Activated CD4-positive, alpha-beta T cell treated with anti-CD3 and anti-CD28 coated beads, Interleukin-2, amount 10 ng/mL, durations not matched to agents 7 days and 5 days (primary cell): ENCODE measurements at regions of chr3 and their contacts with region 1.

Region 1: DNA sequence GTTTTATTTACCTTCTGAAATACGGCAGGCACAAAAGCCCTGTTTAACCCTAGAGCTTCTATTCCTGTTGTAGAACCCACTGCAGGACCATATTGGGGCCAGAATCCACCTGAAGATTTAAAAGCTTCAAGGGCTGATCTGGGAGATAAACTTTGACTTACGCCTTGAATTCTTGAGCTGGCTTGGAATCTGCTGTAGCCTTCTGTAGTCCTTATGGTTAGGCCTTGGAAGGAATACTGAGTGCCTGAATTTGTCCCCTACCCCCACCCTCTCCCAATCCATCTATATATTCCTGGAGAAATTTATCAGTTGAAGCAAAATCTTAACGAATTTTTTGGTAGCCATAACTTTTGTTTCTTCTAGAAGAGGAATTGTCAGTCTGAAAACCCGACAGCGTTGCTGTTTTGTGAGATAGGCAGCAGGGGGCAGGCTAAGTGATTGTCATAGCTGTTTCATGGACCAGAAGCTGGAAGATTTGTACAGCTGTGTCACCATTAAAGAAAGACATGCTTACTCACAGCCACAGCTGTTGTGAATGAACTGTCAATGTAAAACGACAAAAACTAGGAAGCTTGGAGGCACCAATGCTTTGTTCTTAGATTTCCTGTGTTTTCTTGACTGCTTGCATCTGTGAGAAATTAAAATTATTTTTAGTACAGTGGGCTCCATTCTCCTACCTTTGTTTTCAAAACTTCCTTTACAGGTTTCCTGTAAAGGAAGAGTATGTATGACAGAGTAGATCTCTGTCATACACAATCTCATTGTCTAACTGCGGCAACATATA is 12.8 kb downstream of the LXN start:
- DNase-seq: peak; percentile 71
- H3K4me3 Mint-ChIP-seq: no peak overlapping the region
- H3K27ac Mint-ChIP-seq: no peak overlapping the region
- H3K4me1 Mint-ChIP-seq: peaks cover 10% of the 10 kb centered on the region
- H3K27me3 Mint-ChIP-seq: no peaks in the 10 kb centered on the region

Region 2: GRCh38 chr3:158644345-158644908 is 15.2 kb before region 1 on chr3 and contains the start of gene GFM1:
- CTCF ChIA-PET with region 1: interaction called, 32 read pairs
- POLR2A ChIA-PET with region 1: interaction called, 4 read pairs
- DNase-seq: peak; percentile 92
- H3K4me3 Mint-ChIP-seq: peak within 1 kb of the TSS; percentile 93
- H3K27ac Mint-ChIP-seq: peak within 1 kb of the TSS; percentile 89
- H3K4me1 Mint-ChIP-seq: peaks cover 31% of the 10 kb centered on the region
- H3K27me3 Mint-ChIP-seq: no peaks in the 10 kb centered on the region
- total RNA-seq, gene GFM1: 38.1 to 40.7 TPM

Region 3: DNA sequence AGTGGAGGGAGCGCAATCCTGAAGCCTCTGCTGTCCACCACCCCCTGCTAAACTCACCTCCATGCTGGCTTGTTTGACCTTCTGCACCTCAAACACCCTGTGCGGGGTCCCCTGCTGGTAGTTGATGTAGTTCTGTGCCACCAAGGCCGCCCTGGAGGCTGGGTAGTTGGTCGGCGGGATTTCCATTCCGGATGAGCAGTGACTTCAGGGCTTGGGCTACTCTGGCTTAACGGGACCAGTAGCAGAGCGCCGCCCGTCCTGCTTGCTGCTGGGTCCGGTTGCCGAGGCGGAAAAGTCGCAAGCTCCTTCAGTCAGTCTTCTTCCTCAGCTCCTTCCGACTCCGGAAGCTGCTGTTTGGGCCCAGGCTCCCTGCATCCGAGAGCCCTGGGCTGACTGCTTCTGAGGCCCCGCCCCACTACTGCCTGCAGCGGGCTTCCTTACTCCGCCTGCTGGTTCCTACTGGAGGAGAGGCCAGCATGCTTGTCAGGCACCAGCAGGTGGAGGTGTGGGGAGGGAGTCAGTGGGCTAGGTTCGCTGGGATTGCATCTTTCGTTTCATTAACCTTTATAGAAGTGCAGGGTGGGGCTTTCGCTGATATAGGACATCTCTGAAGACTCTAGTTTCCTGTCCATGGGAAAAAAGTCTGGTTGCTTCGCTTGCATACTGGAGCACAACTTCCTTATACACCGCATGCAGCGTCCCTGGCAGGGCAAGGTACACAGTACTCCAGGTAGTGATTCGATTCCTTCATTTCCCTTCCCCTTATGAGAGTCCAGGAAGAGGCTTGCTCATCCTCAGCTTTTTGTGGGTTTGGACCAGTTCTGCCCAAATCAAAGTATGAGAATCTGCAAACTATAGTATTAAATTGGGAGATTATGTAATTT is 12.9 kb after region 1 on chr3 and contains the start of gene LXN:
- CTCF ChIA-PET with region 1: interaction called, 17 read pairs
- POLR2A ChIA-PET with region 1: no interaction called
- DNase-seq: peak; percentile 89
- H3K4me3 Mint-ChIP-seq: peak within 1 kb of the TSS; percentile 91
- H3K27ac Mint-ChIP-seq: peak within 1 kb of the TSS; percentile 95
- H3K4me1 Mint-ChIP-seq: peaks cover 28% of the 10 kb centered on the region
- H3K27me3 Mint-ChIP-seq: no peaks in the 10 kb centered on the region
- total RNA-seq, gene LXN: 9.3 to 11.5 TPM

Region 4: DNA sequence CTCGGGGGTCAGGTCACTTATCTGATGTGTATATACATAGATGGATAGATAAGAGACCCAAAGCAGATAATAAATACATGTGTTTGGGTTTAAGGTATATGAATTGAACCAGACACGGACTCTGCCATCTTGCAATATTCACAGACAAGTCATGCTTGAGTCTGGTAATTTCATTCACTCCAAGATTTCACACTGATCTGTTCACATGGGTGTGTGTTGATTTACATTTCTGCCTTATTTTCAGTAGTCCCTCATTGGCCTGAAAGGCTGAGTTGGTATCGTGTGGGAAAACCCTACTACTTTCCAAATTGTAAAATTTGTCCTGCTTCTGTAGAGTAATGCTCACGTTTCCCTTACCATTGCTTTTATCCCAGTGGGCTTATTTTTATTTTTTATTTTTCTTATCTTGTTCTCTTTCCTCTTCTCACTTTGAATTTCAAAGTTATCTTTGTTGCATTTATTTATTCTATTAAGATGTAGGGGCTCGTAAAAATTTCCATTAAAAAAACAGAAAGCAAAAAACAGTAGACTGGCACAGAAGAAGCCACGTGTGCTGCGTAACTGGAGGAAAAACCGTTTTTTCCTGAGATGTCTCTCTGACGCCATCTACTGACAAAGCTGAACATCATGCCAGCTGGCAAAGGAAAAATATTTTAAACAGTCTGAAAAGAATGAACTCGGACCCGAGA is 131.4 kb after region 1 on chr3:
- CTCF ChIA-PET with region 1: interaction called, 10 read pairs
- POLR2A ChIA-PET with region 1: no interaction called
- DNase-seq: peak; percentile 57
- H3K4me3 Mint-ChIP-seq: peak overlapping the region; percentile 49
- H3K27ac Mint-ChIP-seq: no peak overlapping the region
- H3K4me1 Mint-ChIP-seq: peaks cover 6% of the 10 kb centered on the region
- H3K27me3 Mint-ChIP-seq: peaks cover 8% of the 10 kb centered on the region

Region 5: DNA sequence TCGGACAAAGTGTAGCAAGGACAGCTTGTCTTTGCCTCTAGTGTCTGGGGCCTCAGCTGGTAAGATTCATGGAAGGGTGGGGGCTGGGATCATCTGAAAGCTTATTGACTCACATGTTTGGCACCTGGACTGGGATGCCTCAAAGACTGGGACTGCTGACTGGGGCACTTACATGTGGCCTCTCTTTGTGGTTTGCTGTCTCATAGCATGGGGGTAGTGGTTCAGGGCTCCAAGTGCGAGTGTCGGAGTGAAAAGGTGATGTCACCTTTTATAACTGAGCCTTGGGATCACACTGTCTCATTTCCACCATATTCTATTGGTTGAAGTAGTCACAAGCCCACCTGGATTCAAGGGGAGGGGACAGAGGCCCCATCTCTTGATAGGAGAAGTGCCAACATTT is 149.1 kb after region 1 on chr3:
- CTCF ChIA-PET with region 1: no interaction called
- POLR2A ChIA-PET with region 1: no interaction called
- DNase-seq: no peak
- H3K4me3 Mint-ChIP-seq: no peak overlapping the region
- H3K27ac Mint-ChIP-seq: no peak overlapping the region
- H3K4me1 Mint-ChIP-seq: peaks cover 28% of the 10 kb centered on the region
- H3K27me3 Mint-ChIP-seq: no peaks in the 10 kb centered on the region